Uterus (tissue), 4 donors: ENCODE measurements at regions of chr4 and their contacts with region 1.

Region 1: GRCh38 chr4:20544645-20545044 is 155.6 kb upstream of the PACRGL start:
- DNase-seq: no peak
- H3K4me3 ChIP-seq: no peak overlapping the region
- H3K27ac ChIP-seq: no peak overlapping the region
- H3K4me1 ChIP-seq: no peaks in the 10 kb centered on the region
- H3K27me3 ChIP-seq: no peaks in the 10 kb centered on the region
- CTCF ChIP-seq: peak; percentile 45 to 65 (median 58)
- POLR2A ChIP-seq: no peak

Region 2: DNA sequence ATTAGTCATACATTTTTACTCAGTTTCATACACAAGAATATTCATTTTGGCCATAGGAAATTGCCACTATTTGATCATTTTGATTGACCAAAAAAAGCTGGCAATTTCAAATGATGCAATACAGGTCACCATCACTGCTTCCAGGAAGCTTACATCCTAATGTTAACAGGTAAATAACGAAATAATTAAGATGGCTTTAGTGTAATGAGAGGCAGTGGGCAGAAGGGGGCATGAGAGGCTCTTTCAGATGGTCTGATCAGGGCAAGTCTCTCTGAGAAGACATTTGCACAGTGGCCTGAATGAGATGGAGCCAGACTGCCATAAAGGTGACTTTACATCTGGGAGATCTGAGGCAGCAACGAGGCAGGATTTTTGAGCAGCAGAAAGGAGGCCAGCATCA is 122.2 kb before region 1 on chr4:
- intact Hi-C with region 1: loop called (anchors 10 kb)
- DNase-seq: peak; percentile 21 to 34
- H3K4me3 ChIP-seq: no peak overlapping the region
- H3K27ac ChIP-seq: no peak overlapping the region
- H3K4me1 ChIP-seq: no peaks in the 10 kb centered on the region
- H3K27me3 ChIP-seq: no peaks in the 10 kb centered on the region
- CTCF ChIP-seq: peak; percentile 51 to 59 (median 55)
- POLR2A ChIP-seq: no peak